ENCODE measurements at regions of chr1 and their contacts with region 1.

Region 1: GRCh38 chr1:225474986-225475820 is 47.4 kb upstream of the LBR start:
- DNase-seq: peak; percentile 58
- ATAC-seq: peak; percentile 80
- H3K4me3 Mint-ChIP-seq: no peak overlapping the region
- H3K27ac Mint-ChIP-seq: no peak overlapping the region
- H3K4me1 Mint-ChIP-seq: peaks cover 41% of the 10 kb centered on the region
- H3K27me3 Mint-ChIP-seq: no peaks in the 10 kb centered on the region
- CTCF ChIP-seq: peak; percentile 100

Region 2: DNA sequence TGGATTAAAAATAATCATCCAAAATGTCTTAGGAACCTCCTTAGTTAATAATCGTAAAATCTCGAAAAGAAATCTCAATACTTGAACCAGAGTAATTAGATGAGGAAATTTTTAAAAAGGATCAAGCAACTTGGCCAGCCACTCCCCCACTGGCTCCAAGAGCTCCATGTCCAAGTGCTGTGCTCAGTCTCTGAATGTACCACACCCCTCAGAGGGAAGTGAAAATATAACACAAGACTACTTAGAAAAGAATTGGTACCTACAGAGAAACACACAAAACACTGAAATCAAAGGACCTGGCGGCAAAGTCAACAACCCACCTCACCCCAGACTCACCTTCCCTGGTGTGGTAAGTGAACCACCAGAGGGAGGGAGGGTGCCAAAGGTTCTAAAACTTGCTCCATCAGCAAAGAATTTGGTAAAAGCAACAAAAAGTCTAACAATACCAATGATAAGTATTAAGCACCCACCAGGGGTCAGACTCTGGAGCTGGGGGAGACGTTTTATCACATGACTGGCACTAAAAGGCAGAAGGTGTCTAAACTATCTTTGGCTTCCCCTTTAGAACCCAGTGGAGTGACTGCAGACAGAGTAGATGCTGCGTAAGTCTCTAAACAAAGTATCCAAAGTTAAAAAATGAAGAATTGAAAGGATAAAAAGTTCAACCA is 61.4 kb before region 1 on chr1:
- CTCF ChIA-PET with region 1: no interaction called
- POLR2A ChIA-PET with region 1: no interaction called
- intact Hi-C with region 1: no loop called
- DNase-seq: no peak
- ATAC-seq: no peak
- H3K4me3 Mint-ChIP-seq: no peak overlapping the region
- H3K27ac Mint-ChIP-seq: no peak overlapping the region
- H3K4me1 Mint-ChIP-seq: peaks cover 12% of the 10 kb centered on the region
- H3K27me3 Mint-ChIP-seq: no peaks in the 10 kb centered on the region
- CTCF ChIP-seq: no peak

Region 3: GRCh38 chr1:225428068-225428880 is 46.9 kb before region 1 on chr1:
- CTCF ChIA-PET with region 1: interaction called, 14 read pairs
- POLR2A ChIA-PET with region 1: interaction called, 6 read pairs
- intact Hi-C with region 1: no loop called
- DNase-seq: peak; percentile 91
- ATAC-seq: peak; percentile 94
- H3K4me3 Mint-ChIP-seq: peak overlapping the region; percentile 99
- H3K27ac Mint-ChIP-seq: peak overlapping the region; percentile 90
- H3K4me1 Mint-ChIP-seq: peaks cover 47% of the 10 kb centered on the region
- H3K27me3 Mint-ChIP-seq: no peaks in the 10 kb centered on the region
- CTCF ChIP-seq: no peak

Region 4: DNA sequence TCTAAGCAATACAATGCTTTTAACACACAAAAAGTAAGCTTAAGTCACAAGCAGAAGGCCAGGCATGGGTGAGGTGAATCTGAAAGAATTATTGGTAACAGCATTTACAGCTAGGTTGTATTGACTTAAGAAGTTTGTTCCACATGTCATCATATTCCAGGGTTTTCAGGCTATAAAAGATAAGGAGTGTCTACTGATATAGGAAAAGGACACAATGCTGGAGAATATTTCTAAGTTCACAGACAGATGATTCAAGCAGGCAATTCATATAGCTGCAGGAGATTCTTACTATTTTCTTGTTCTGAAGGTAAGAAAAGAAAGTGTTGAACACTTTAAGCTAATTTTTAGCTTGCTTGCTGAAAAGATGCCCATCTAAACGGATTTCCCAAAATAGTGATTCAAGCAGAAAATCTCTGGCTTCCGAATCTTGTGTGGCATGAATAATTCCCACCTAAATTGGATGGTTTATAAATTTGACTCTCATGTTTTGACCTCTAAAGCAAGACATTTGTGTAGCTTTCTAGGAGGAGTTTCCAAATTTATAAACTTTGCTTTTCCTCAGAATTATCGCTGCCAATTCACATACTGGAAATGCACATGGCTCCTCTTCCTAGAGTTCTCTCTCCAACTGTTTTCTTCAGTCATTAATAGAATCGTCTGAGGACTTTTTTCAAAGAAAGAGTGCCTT is 48.2 kb after region 1 on chr1:
- CTCF ChIA-PET with region 1: interaction called, 10 read pairs
- POLR2A ChIA-PET with region 1: no interaction called
- intact Hi-C with region 1: no loop called
- DNase-seq: no peak
- ATAC-seq: no peak
- H3K4me3 Mint-ChIP-seq: no peak overlapping the region
- H3K27ac Mint-ChIP-seq: no peak overlapping the region
- H3K4me1 Mint-ChIP-seq: no peaks in the 10 kb centered on the region
- H3K27me3 Mint-ChIP-seq: peaks cover 2% of the 10 kb centered on the region
- CTCF ChIP-seq: no peak

Region 5: DNA sequence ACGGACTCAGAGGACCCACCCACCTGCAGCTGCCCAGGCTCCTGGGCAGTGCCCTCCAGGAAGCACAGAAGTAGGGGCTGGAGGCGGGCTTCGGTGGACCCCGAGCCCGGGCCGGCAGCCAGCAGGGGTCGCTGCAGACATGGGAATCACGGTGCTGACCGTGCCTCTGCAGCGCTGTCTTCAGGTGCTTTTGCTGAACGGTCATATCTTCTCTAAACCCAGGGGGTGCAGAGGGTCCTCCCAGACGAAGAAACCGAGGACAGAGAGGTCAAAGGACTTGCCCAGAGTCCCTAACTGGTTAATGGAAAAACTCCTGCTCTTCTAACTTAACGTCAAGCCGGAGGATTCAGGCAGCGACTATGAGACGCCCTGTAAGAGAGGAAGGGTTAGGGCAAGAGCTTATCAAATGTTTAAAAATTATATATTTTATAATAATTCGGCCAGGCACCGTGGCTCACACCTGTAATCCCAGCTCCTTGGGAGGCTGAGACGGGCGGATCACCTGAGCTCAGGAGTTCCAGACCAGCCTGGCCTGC is 487.3 kb after region 1 on chr1:
- CTCF ChIA-PET with region 1: interaction called, 11 read pairs
- POLR2A ChIA-PET with region 1: no interaction called
- intact Hi-C with region 1: no loop called
- DNase-seq: peak; percentile 85
- ATAC-seq: peak; percentile 95
- H3K4me3 Mint-ChIP-seq: no peak overlapping the region
- H3K27ac Mint-ChIP-seq: no peak overlapping the region
- H3K4me1 Mint-ChIP-seq: peaks cover 4% of the 10 kb centered on the region
- H3K27me3 Mint-ChIP-seq: no peaks in the 10 kb centered on the region
- CTCF ChIP-seq: peak; percentile 94

Region 6: DNA sequence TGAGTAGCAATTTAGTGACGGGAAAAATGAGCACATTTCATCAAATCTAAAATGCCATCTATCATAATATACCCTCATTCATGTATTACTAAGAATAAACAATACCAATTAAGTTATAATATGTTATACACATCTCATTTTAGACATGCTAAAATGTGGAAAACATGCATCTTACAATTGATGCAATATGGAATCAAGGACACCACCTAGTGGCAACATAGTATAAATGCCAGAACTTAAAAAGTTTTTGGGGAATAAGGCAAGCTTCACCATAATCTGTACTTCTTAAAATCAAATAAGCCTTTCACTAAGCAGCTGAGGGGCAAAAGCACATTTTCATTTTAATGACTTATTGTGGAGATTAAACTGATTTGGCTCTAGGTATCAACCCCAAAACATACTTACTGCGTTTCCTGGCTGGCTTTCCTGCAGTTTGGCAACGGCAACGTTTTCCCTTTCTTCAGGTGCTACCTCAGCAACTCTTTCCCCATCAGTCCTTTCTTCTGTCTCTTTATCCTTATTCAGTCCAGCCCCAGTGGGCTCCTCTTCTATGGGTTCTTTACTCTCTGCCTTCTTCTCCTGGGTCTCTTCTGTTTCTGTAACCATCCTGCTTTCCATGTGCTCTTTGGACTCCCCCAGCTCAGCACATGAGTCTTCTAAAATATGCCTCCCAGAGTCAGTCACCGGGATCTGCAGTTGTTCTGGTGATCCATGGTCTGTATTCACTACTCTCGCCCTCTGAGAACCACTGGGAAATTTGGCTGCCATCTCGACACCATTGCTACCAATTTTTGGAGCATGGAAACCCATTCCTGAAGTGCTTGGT is 512.5 kb after region 1 on chr1:
- CTCF ChIA-PET with region 1: interaction called, 33 read pairs
- POLR2A ChIA-PET with region 1: no interaction called
- intact Hi-C with region 1: no loop called
- DNase-seq: no peak
- ATAC-seq: peak; percentile 63
- H3K4me3 Mint-ChIP-seq: no peak overlapping the region
- H3K27ac Mint-ChIP-seq: no peak overlapping the region
- H3K4me1 Mint-ChIP-seq: peaks cover 34% of the 10 kb centered on the region
- H3K27me3 Mint-ChIP-seq: no peaks in the 10 kb centered on the region
- CTCF ChIP-seq: peak; percentile 78

Measured in activated CD8-positive, alpha-beta T cell treated with anti-CD3 and anti-CD28 coated beads for 36 hours (primary cell).